CD8-positive, alpha-beta T cell (primary cell): ENCODE measurements at regions of chr10 and their contacts with region 1.

Region 1: GRCh38 chr10:6202684-6203330 is at the start of gene PFKFB3:
- DNase-seq: peak; percentile 76 to 96 (median 91)
- ATAC-seq: peak; percentile 62
- H3K4me3 ChIP-seq: peak within 1 kb of the TSS; percentile 54 to 61
- H3K4me3 Mint-ChIP-seq: peak within 1 kb of the TSS; percentile 99
- H3K27ac ChIP-seq: peak within 1 kb of the TSS; percentile 29 to 68
- H3K27ac Mint-ChIP-seq: peak within 1 kb of the TSS; percentile 94
- H3K4me1 ChIP-seq: peaks cover 18% of the 10 kb centered on the region
- H3K4me1 Mint-ChIP-seq: peaks cover 26% of the 10 kb centered on the region
- H3K27me3 ChIP-seq: no peaks in the 10 kb centered on the region
- H3K27me3 Mint-ChIP-seq: no peaks in the 10 kb centered on the region
- CTCF ChIP-seq: peak; percentile 94
- total RNA-seq, gene PFKFB3: 221 to 233 TPM

Region 2: GRCh38 chr10:5396556-5397300 is 806.1 kb before region 1 on chr10:
- CTCF ChIA-PET with region 1: no interaction called
- POLR2A ChIA-PET with region 1: no interaction called
- intact Hi-C with region 1: no loop called
- DNase-seq: no peak
- ATAC-seq: no peak
- H3K4me3 ChIP-seq: no peak overlapping the region
- H3K4me3 Mint-ChIP-seq: no peak overlapping the region
- H3K27ac ChIP-seq: no peak overlapping the region
- H3K27ac Mint-ChIP-seq: no peak overlapping the region
- H3K4me1 ChIP-seq: no peaks in the 10 kb centered on the region
- H3K4me1 Mint-ChIP-seq: no peaks in the 10 kb centered on the region
- H3K27me3 ChIP-seq: no peaks in the 10 kb centered on the region
- H3K27me3 Mint-ChIP-seq: peaks cover 4% of the 10 kb centered on the region
- CTCF ChIP-seq: no peak

Region 3: GRCh38 chr10:5927306-5927705 is 275.5 kb before region 1 on chr10:
- CTCF ChIA-PET with region 1: no interaction called
- POLR2A ChIA-PET with region 1: no interaction called
- intact Hi-C with region 1: no loop called
- DNase-seq: no peak
- ATAC-seq: no peak
- H3K4me3 ChIP-seq: no peak overlapping the region
- H3K4me3 Mint-ChIP-seq: no peak overlapping the region
- H3K27ac ChIP-seq: no peak overlapping the region
- H3K27ac Mint-ChIP-seq: no peak overlapping the region
- H3K4me1 ChIP-seq: no peaks in the 10 kb centered on the region
- H3K4me1 Mint-ChIP-seq: no peaks in the 10 kb centered on the region
- H3K27me3 ChIP-seq: no peaks in the 10 kb centered on the region
- H3K27me3 Mint-ChIP-seq: no peaks in the 10 kb centered on the region
- CTCF ChIP-seq: no peak

Region 4: GRCh38 chr10:6108603-6109443 is 94.0 kb before region 1 on chr10:
- CTCF ChIA-PET with region 1: interaction called, 17 read pairs
- POLR2A ChIA-PET with region 1: no interaction called
- intact Hi-C with region 1: loop called (anchors 1 kb)
- DNase-seq: peak in 5 of 9 experiments; percentile 15 to 77 (median 44)
- ATAC-seq: peak; percentile 85
- H3K4me3 ChIP-seq: no peak overlapping the region
- H3K4me3 Mint-ChIP-seq: peak overlapping the region; percentile 53
- H3K27ac ChIP-seq: no peak overlapping the region
- H3K27ac Mint-ChIP-seq: peak overlapping the region; percentile 62
- H3K4me1 ChIP-seq: peaks cover 8% of the 10 kb centered on the region
- H3K4me1 Mint-ChIP-seq: peaks cover 29% of the 10 kb centered on the region
- H3K27me3 ChIP-seq: no peaks in the 10 kb centered on the region
- H3K27me3 Mint-ChIP-seq: no peaks in the 10 kb centered on the region
- CTCF ChIP-seq: peak; percentile 86

Region 5: DNA sequence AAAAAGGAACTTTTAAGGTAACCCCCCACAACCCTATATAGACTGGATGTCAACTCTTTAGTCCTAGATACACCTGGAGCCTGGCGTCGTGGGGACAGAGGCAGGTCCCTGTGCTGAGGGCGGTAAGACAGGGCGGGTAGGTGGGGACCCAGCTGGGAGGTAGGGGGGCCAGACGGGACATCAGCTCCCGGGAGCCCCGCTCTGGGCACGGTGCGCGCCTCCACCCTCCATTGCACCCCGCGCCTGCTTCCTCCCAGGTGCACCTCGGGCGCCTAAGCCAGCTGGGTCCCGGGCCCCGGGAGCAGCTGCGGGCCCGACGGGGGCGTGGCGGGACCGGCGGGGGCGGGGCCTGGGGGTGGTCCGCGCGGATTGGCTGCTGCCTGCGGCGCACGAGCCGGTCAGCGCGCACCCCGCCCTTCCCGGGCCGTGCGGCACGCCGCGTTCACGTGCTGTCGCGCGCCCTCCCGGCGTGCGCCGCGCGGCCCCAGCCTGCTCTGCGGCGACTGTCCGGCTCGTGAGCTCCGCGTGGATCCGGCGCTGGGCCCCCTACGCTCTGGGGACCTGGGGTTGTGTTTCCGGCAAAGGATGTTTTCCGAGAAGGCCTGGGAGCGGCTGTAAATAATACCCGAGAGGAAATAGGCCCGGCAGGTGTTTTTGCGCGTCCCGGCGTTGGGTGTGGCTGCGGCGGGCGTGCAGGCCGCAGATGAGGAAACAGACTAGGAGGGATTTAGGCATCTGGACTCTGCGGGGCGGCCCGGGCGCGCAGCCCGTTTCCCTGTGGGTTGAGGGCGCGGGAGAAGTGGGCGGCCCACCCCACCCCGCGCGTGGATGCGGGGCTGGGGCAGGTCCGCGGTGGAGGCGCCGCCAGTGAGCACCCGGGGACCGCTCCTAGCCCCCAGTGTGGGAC is 39.2 kb before region 1 on chr10:
- CTCF ChIA-PET with region 1: interaction called, 14 read pairs
- POLR2A ChIA-PET with region 1: interaction called, 24 read pairs
- intact Hi-C with region 1: loop called (anchors 1 kb)
- DNase-seq: peak; percentile 80 to 97 (median 92)
- ATAC-seq: peak; percentile 91
- H3K4me3 ChIP-seq: peak overlapping the region; percentile 76 to 81
- H3K4me3 Mint-ChIP-seq: peak overlapping the region; percentile 92
- H3K27ac ChIP-seq: peak overlapping the region; percentile 86 to 90
- H3K27ac Mint-ChIP-seq: peak overlapping the region; percentile 98
- H3K4me1 ChIP-seq: peaks cover 31% of the 10 kb centered on the region
- H3K4me1 Mint-ChIP-seq: peaks cover 54% of the 10 kb centered on the region
- H3K27me3 ChIP-seq: no peaks in the 10 kb centered on the region
- H3K27me3 Mint-ChIP-seq: no peaks in the 10 kb centered on the region
- CTCF ChIP-seq: no peak

Region 6: GRCh38 chr10:6269953-6270867 is 67.4 kb after region 1 on chr10:
- CTCF ChIA-PET with region 1: interaction called, 4 read pairs
- POLR2A ChIA-PET with region 1: interaction called, 7 read pairs
- intact Hi-C with region 1: loop called (anchors 2 to 5 kb)
- DNase-seq: peak; percentile 42 to 93 (median 67)
- ATAC-seq: peak; percentile 70
- H3K4me3 ChIP-seq: no peak overlapping the region
- H3K4me3 Mint-ChIP-seq: peak overlapping the region; percentile 30
- H3K27ac ChIP-seq: peak overlapping the region; percentile 26 to 70
- H3K27ac Mint-ChIP-seq: peak overlapping the region; percentile 92
- H3K4me1 ChIP-seq: peaks cover 34% of the 10 kb centered on the region
- H3K4me1 Mint-ChIP-seq: peaks cover 47% of the 10 kb centered on the region
- H3K27me3 ChIP-seq: no peaks in the 10 kb centered on the region
- H3K27me3 Mint-ChIP-seq: no peaks in the 10 kb centered on the region
- CTCF ChIP-seq: no peak

Region 7: DNA sequence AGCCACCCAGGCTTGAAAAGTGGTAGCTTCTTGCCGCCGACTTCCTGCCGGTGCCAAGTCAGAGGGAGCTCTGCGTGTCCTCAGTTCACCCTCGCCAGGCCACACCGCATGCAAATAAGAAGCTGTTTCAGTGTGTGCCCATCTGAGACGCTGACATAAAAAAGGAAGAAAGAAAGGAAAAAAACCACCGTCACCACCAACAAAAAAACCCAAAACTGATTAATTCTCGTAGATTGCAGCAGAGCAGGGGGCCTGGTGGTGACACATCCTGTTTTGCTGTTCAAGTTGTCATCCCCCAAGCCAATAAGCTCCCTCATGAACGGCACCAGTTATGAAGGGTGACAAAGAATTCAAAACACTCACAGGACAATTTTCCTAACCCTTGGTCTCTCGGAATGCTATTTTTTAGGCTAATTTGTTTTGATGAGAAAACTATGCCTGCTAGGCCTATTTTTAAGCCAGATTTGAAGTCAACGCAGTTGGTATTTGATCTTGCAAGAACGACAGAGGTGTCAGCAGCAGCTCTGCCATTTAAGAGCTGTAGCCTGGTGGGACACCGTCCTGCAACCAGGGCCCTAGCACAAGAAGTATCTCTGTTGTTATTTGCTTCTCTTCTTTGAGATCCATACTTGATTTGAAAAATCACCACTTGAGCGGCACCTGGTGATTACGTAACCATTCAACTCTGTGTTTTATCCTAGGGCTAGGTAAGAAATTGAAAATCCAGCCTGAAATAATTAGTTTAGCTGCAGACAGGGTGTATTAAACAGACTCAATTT is 145.5 kb after region 1 on chr10:
- CTCF ChIA-PET with region 1: interaction called, 22 read pairs
- POLR2A ChIA-PET with region 1: interaction called, 48 read pairs
- intact Hi-C with region 1: loop called (anchors 1 kb)
- DNase-seq: peak; percentile 59 to 96 (median 81)
- ATAC-seq: peak; percentile 89
- H3K4me3 ChIP-seq: peak overlapping the region; percentile 30 to 39
- H3K4me3 Mint-ChIP-seq: peak overlapping the region; percentile 81
- H3K27ac ChIP-seq: peak overlapping the region; percentile 71 to 79
- H3K27ac Mint-ChIP-seq: peak overlapping the region; percentile 97
- H3K4me1 ChIP-seq: peaks cover 34% of the 10 kb centered on the region
- H3K4me1 Mint-ChIP-seq: peaks cover 61% of the 10 kb centered on the region
- H3K27me3 ChIP-seq: no peaks in the 10 kb centered on the region
- H3K27me3 Mint-ChIP-seq: no peaks in the 10 kb centered on the region
- CTCF ChIP-seq: no peak

Region 8: GRCh38 chr10:6593241-6593671 is 390.4 kb after region 1 on chr10:
- CTCF ChIA-PET with region 1: interaction called, 3 read pairs
- POLR2A ChIA-PET with region 1: no interaction called
- intact Hi-C with region 1: loop called in 1 of 2 experiments (anchors 10 kb)
- DNase-seq: peak in 2 of 9 experiments; percentile 29 to 53
- ATAC-seq: peak; percentile 45
- H3K4me3 ChIP-seq: no peak overlapping the region
- H3K4me3 Mint-ChIP-seq: peak overlapping the region; percentile 32
- H3K27ac ChIP-seq: peak overlapping the region; percentile 62 to 86
- H3K27ac Mint-ChIP-seq: peak overlapping the region; percentile 94
- H3K4me1 ChIP-seq: peaks cover 97% of the 10 kb centered on the region
- H3K4me1 Mint-ChIP-seq: peaks cover 96% of the 10 kb centered on the region
- H3K27me3 ChIP-seq: no peaks in the 10 kb centered on the region
- H3K27me3 Mint-ChIP-seq: no peaks in the 10 kb centered on the region
- CTCF ChIP-seq: no peak